ENCODE measurements at regions of chr9 and their contacts with region 1.

Region 1: DNA sequence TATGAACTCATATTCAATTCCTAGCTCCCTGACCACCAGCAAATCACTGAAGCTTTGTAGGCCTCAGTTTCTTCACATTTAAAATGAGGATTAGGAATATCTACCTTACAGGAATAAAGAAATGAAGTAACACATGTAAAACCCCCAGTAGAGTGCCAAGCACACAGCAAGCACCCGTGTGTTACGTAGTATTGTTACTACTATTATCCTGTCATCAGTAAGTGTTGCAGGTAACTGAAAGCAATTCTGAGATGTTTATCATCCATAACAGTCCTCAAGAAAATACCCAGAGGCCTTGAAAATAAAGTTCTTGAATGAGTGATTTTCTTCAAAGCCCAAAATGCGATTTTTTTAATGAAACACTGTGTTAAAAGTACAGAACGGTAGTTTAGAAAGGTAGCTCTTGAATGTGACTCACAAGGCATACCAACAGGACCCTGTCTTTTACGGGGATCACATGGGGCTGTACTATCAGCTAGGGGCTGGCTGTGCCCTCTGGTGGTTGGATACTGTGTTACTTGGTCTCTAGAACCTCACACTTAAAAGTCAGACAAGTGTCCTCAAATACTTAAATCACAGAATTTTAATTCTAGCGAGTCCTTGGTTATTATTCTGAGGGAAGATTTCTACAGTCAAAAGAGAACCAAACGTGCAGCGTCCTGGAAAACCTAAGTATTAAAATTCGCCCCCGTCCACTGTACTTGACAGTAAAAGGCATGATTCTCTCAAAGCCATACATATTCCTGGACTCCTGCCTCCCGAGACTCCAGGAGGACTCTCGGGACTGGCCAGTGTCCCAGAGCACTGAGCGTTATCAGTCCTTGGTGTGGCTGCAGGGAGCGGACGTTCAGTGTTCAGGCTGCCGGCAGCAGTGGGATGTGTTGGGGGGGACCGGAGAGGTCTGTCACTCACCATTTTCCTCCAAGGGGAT is 725 bp downstream of the NDUFB6 start:
- DNase-seq: peak; percentile 85
- ATAC-seq: peak; percentile 92
- H3K4me3 Mint-ChIP-seq: peak overlapping the region; percentile 98
- H3K27ac Mint-ChIP-seq: peak overlapping the region; percentile 98
- H3K4me1 Mint-ChIP-seq: peaks cover 25% of the 10 kb centered on the region
- H3K27me3 Mint-ChIP-seq: no peaks in the 10 kb centered on the region

Region 2: DNA sequence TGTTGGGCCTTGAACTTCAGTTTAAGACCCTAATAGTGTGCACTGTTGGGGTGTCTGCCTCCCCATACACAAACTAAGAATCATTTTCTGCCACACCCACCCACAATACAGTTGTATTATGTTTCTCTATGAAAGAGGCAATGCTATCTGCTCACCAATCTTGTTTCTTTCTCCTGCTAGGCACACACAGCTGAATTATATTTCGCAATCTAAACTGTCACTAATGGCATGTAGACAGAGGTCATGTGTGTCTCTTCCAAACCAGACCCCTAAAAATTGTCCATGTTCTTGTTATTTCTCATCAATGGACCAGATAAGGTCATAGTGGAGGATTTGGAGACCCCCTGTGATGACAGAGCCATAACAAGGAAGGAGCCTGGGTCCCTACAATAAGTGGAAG is 103.5 kb before region 1 on chr9:
- CTCF ChIA-PET with region 1: no interaction called
- POLR2A ChIA-PET with region 1: interaction called, 11 read pairs
- intact Hi-C with region 1: no loop called
- DNase-seq: no peak
- ATAC-seq: no peak
- H3K4me3 Mint-ChIP-seq: no peak overlapping the region
- H3K27ac Mint-ChIP-seq: no peak overlapping the region
- H3K4me1 Mint-ChIP-seq: no peaks in the 10 kb centered on the region
- H3K27me3 Mint-ChIP-seq: no peaks in the 10 kb centered on the region

Region 3: GRCh38 chr9:32543047-32543446 is 29.2 kb before region 1 on chr9:
- CTCF ChIA-PET with region 1: interaction called, 12 read pairs
- POLR2A ChIA-PET with region 1: no interaction called
- intact Hi-C with region 1: no loop called
- DNase-seq: no peak
- ATAC-seq: peak; percentile 26
- H3K4me3 Mint-ChIP-seq: no peak overlapping the region
- H3K27ac Mint-ChIP-seq: no peak overlapping the region
- H3K4me1 Mint-ChIP-seq: peaks cover 12% of the 10 kb centered on the region
- H3K27me3 Mint-ChIP-seq: no peaks in the 10 kb centered on the region

Region 4: DNA sequence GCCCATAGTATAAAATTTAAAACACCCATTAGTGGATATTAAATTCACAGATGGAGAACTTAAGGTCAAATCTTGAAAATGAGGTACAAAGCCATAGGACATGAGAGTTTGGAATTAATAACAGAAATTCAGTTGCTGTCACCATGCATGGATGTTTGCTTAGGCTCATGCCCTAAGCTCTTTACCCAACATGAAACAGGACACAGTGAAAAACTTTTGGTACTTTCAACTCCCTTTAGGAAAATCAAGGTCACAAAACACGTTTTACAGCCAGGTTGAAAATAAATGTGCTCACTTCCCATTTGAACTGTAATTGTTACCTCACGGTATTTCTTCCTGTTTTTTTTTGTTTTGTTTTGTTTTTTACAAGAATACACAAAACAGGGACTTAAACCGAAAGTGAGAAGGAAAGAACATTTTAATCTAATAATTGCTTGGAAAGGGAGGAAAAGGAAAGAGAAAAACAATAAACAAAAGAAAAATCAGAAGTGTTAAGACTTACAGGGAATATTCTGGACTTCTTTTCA is 13.8 kb before region 1 on chr9:
- CTCF ChIA-PET with region 1: interaction called, 18 read pairs
- POLR2A ChIA-PET with region 1: interaction called, 4 read pairs
- intact Hi-C with region 1: no loop called
- DNase-seq: no peak
- ATAC-seq: no peak
- H3K4me3 Mint-ChIP-seq: no peak overlapping the region
- H3K27ac Mint-ChIP-seq: no peak overlapping the region
- H3K4me1 Mint-ChIP-seq: peaks cover 37% of the 10 kb centered on the region
- H3K27me3 Mint-ChIP-seq: no peaks in the 10 kb centered on the region